ENCODE measurements at regions of chr4 and their contacts with region 1.

Region 1: GRCh38 chr4:17447675-17448298 is 64.1 kb downstream of the QDPR start:
- DNase-seq: no peak
- ATAC-seq: peak; percentile 93

Region 2: DNA sequence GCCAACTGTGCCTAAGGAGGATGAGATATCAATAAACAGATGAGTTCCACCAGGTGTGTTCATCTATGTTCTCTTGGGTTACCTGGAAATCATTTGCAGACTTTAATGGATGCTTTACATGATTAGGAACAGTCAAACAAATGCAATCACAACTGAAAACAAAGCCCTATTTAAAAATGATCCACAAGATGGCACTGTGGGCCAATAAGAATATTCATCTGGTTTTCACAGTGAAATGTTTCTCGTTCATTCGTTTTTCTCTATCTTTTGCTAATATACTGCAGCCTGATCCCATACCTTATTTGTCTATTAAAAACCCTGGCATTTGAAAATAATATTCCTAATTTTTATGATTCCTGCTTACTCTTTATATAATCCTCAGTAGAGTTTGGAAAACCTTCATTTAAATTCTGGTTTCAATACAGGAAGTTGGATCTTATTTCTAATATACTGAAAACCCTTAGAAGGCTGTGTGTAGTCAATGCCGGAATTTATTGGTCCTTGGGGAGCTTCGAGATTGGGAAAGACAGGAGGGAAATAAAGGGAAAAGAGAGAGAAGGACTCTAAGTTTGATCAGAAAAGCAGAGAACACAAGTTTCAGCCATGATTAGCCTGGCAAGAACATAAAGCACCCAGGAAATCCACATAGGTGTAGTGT is 1157.8 kb before region 1 on chr4:
- intact Hi-C with region 1: loop called (anchors 5 kb)
- DNase-seq: no peak
- ATAC-seq: no peak

Region 3: DNA sequence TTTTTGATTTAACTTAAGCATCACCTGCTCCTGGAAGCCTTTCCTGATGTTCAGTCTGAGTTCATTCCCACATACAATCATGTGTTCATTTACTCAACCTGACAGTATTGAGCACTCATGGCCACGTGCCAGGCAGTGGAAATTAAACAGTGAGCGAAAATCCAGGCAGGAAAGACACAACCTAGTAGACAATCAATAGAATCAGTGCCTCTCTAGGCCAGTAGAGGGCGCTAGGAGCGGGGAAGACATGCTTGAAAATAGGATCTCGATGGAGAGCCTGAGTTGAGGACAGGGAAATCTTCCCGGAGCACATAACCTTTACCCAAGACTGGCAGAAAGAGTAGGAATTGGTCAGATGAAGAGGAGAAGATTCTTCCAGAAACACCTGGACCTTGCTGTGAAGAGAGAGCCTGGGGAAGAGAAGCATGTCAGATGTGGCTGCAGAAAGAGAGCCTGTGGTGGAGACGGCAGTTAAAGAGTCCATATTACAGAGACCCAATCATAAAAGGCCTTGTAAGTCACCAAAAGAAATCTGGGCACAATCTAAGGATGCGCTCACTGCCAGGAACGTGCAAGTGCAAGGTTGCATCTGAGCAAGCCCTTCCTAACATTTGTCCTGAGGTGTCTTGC is 652.9 kb before region 1 on chr4:
- intact Hi-C with region 1: loop called (anchors 10 kb)
- DNase-seq: no peak
- ATAC-seq: peak; percentile 52

Region 4: DNA sequence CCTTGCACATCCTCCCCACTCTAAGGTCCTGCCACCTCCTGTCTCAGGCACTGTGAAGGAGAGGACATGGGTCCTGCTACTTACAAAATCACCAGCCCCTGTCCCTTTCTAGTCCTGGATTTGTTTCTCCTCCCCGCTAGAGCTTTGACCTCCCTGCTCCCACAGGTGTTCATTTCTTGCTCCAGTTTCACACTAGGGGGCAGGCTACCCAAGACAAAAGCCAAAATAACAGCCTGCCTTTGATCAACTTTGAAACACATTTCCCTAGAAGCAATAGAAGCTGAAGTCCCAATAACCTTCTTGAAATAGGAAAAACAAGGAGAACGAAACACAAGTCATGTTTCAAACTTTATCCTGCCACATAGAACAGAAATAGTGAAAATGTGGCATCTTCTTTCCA is 100.3 kb before region 1 on chr4:
- intact Hi-C with region 1: loop called (anchors 5 kb)
- DNase-seq: no peak
- ATAC-seq: no peak

Measured in Right ventricle myocardium inferior (tissue), 1 donor.